Heart right ventricle (tissue), 16 donors: ENCODE measurements at regions of chr16 and their contacts with region 1.

Region 1: DNA sequence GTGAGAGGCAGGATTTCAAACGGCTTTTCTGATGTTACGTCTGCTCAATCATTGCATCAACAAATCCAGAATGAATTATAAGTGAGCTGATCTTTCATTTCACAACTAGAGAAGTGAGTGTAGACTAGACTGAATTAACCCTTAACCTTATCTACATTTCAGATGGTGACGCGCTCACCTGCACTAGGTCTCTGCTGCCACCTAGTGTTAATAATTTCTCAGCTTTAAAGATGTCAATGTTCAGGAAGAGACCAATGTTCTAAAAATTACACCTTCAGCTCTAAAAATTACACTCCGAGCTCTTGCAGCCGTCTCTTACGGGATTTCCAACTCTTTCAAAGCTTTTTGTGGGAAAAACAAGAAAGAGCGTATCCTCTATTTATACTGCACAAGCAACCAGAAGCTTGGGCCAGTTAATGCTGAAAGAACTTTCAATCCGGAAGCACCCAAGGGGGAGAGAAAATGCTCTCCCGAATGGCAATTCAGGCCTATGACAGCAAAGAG is 88.2 kb upstream of the FA2H start:
- DNase-seq: no peak
- ATAC-seq: peak in 2 of 8 donors; percentile 56 to 57
- H3K4me3 ChIP-seq: no peak overlapping the region
- H3K27ac ChIP-seq: no peak overlapping the region
- H3K4me1 ChIP-seq: peaks cover 0 to 8% (median 1%) of the 10 kb centered on the region in 9 donors
- H3K27me3 ChIP-seq: no peaks in the 10 kb centered on the region
- CTCF ChIP-seq: peak; percentile 65 to 93 (median 81)

Region 2: DNA sequence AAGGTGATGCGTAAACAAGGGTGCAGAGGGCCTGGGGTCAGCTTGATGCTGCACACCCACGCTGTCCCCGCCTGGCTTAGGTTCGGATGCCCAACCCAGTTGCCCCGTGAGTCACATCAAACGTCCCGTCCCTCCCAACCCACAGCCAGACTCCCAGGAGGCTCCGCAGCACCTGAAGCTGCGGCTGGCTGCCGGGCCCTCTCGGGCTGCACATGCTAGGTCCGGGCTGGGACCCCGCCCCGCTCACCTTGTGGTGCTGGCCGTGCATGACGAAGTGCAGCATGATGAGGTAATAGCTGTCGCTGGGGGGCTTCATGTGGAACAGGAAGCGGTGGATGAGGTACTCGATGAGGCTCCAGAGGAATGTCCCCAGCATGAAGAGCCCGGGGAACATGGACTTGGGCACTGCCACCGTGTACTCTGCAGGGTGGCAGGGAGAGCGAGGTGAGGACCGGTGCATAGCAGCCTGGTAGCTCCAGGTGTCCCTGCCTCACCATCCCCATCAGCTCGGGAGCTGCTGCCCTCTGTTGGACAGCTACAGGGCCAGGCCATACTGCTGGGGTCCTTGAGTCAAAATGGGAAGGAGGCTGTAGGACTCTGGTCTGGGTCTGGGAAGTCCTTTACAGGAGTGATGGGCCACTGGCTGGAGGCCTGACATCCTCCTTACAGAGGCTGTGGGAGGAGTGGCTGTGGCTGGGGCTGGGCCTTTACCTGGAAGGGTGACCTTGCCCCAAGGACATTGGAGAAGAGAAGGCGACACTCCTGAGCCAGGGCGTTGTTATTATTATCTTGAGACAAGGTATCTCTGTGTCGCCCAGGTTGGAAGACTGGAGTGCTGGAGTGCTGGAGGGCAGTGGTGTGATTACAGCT is 143.8 kb before region 1 on chr16:
- intact Hi-C with region 1: loop called in 4 of 10 experiments (anchors 5 kb)
- DNase-seq: no peak
- ATAC-seq: no peak
- H3K4me3 ChIP-seq: no peak overlapping the region
- H3K27ac ChIP-seq: no peak overlapping the region
- H3K4me1 ChIP-seq: no peaks in the 10 kb centered on the region
- H3K27me3 ChIP-seq: peaks cover 0 to 11% (median 2%) of the 10 kb centered on the region in 7 donors
- CTCF ChIP-seq: no peak

Region 3: DNA sequence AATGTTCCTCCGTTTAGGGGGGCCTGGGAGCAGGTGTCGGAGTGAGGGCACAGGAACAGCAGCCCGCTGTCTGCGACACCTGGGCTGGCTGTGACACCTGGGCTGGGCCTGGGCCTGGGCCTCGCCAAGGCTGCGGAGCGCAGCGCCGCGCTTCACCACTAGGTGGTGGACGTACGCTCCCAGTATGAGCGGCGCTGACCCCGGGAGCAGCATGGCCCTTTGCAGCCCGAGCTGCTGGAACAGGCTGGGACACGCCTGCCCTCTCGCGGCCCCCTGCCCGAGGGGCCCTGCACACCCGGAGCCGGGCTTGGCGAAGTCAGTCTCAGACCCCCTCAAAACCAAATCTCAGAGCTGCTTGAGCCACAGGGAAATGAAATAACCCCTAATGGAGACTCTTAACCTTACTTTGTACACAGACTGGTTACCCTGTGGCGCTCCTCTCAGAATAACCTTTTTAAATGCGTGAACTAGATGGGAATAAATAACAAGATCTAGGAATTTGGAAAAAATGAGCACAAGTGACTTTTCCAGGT is 49.6 kb before region 1 on chr16:
- intact Hi-C with region 1: loop called in 9 of 10 experiments (anchors 1 to 5 kb)
- DNase-seq: peak; percentile 47 to 74
- ATAC-seq: peak; percentile 94 to 99 (median 96)
- H3K4me3 ChIP-seq: no peak overlapping the region
- H3K27ac ChIP-seq: no peak overlapping the region
- H3K4me1 ChIP-seq: peaks cover 0 to 7% (median 3%) of the 10 kb centered on the region in 9 donors
- H3K27me3 ChIP-seq: no peaks in the 10 kb centered on the region
- CTCF ChIP-seq: peak; percentile 79 to 95 (median 90)